Activated B cell treated with CpG ODN at 0.5 μM for 24 hours (primary cell): ENCODE measurements at regions of chr14 and their contacts with region 1.

Region 1: DNA sequence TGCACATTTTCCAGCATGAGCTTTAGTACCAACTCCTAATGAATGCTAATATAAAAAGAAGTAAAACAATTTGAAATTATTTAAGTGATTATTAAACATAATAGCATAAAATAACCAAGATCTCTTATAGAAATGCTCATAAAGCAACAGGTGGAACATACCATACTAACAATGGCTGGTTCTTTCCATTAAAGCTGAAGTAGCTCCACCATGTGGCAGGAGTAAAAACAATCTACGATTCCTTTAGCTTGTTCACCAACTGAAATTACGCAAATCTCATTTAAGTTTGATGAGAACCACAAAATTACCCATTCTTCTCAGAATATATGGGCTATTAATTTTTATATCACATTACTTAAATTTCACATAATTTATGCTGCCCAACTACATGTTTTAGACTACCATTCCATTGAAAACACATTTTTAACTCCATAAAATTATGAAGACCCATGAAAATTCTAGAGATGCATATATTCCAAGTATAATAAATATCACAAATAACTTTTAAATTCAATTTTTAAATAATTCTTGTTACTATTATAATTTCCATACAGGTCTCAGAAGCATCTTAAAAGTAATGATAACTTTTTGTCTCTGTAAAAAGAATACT is 213.6 kb downstream of the DAD1 start:
- DNase-seq: no peak
- ATAC-seq: peak; percentile 65
- H3K4me3 Mint-ChIP-seq: no peak overlapping the region
- H3K27ac Mint-ChIP-seq: no peak overlapping the region
- H3K4me1 Mint-ChIP-seq: peaks cover 5% of the 10 kb centered on the region
- H3K27me3 Mint-ChIP-seq: no peaks in the 10 kb centered on the region
- CTCF ChIP-seq: peak; percentile 46

Region 2: DNA sequence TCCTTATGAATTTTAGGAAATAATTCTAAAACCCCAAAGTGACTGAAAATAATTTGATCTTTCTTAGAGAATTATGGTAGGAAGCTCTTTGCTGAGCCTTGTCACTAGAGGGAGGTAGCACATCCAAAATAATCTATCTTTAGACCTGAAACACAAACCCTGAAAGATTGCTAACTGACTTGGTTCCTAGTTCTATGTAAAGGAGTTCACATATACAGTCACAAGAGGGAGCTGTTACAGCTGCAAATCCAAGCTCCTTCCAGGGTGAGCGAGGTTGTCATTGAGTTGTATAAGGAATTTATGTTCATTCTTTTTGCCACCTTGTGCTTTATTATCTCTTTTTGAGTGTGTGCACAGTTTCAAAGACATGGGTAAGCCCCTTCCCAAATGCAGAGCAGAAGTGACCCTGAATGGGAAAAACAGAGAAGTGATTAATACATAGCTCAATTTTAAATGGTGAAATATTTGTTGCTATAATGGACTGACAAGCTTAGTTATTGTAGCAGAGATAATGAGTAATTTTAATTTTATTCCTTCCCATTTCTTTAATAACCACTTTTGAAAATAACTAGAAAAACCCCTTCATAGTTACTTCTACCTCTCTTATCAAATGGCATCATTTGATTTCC is 174.3 kb before region 1 on chr14:
- CTCF ChIA-PET with region 1: interaction called, 11 read pairs
- POLR2A ChIA-PET with region 1: no interaction called
- intact Hi-C with region 1: no loop called
- DNase-seq: no peak
- ATAC-seq: peak; percentile 72
- H3K4me3 Mint-ChIP-seq: no peak overlapping the region
- H3K27ac Mint-ChIP-seq: no peak overlapping the region
- H3K4me1 Mint-ChIP-seq: no peaks in the 10 kb centered on the region
- H3K27me3 Mint-ChIP-seq: peaks cover 15% of the 10 kb centered on the region
- CTCF ChIP-seq: no peak

Region 3: GRCh38 chr14:22276913-22277816 is 98.3 kb before region 1 on chr14:
- CTCF ChIA-PET with region 1: interaction called, 11 read pairs
- POLR2A ChIA-PET with region 1: no interaction called
- intact Hi-C with region 1: no loop called
- DNase-seq: no peak
- ATAC-seq: no peak
- H3K4me3 Mint-ChIP-seq: no peak overlapping the region
- H3K27ac Mint-ChIP-seq: no peak overlapping the region
- H3K4me1 Mint-ChIP-seq: peaks cover 15% of the 10 kb centered on the region
- H3K27me3 Mint-ChIP-seq: peaks cover 25% of the 10 kb centered on the region
- CTCF ChIP-seq: no peak

Region 4: DNA sequence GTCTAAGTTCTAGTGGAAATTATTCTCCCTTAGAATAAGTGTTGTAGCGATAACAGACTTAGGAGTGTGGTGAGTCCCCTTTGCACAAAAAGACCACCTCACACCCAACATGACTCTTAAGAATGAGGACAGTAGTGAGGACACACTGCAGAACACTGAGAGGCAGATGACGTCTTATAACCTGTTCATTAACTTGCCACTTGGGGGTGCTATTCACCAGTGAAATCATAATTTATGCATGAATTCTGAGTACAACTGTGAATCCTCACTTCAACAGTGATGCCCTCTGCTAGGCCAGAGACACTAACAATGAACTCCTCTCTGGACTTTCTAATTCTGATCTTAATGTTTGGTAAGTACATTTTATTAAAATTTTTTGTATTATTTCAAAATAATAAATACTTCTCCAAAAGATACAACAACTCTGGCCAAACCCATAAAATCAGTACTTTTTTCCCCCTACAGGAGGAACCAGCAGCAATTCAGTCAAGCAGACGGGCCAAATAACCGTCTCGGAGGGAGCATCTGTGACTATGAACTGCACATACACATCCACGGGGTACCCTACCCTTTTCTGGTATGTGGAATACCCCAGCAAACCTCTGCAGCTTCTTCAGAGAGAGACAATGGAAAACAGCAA is 61.1 kb before region 1 on chr14:
- CTCF ChIA-PET with region 1: interaction called, 88 read pairs
- POLR2A ChIA-PET with region 1: no interaction called
- intact Hi-C with region 1: loop called (anchors 1 kb)
- DNase-seq: no peak
- ATAC-seq: peak; percentile 95
- H3K4me3 Mint-ChIP-seq: no peak overlapping the region
- H3K27ac Mint-ChIP-seq: no peak overlapping the region
- H3K4me1 Mint-ChIP-seq: no peaks in the 10 kb centered on the region
- H3K27me3 Mint-ChIP-seq: no peaks in the 10 kb centered on the region
- CTCF ChIP-seq: no peak

Region 5: GRCh38 chr14:22319526-22320361 is 55.7 kb before region 1 on chr14:
- CTCF ChIA-PET with region 1: interaction called, 88 read pairs
- POLR2A ChIA-PET with region 1: no interaction called
- intact Hi-C with region 1: loop called (anchors 1 kb)
- DNase-seq: no peak
- ATAC-seq: peak; percentile 77
- H3K4me3 Mint-ChIP-seq: no peak overlapping the region
- H3K27ac Mint-ChIP-seq: no peak overlapping the region
- H3K4me1 Mint-ChIP-seq: no peaks in the 10 kb centered on the region
- H3K27me3 Mint-ChIP-seq: peaks cover 4% of the 10 kb centered on the region
- CTCF ChIP-seq: no peak

Region 6: GRCh38 chr14:22341049-22341448 is 34.4 kb before region 1 on chr14:
- CTCF ChIA-PET with region 1: no interaction called
- POLR2A ChIA-PET with region 1: no interaction called
- intact Hi-C with region 1: no loop called
- DNase-seq: no peak
- ATAC-seq: no peak
- H3K4me3 Mint-ChIP-seq: no peak overlapping the region
- H3K27ac Mint-ChIP-seq: no peak overlapping the region
- H3K4me1 Mint-ChIP-seq: no peaks in the 10 kb centered on the region
- H3K27me3 Mint-ChIP-seq: peaks cover 11% of the 10 kb centered on the region
- CTCF ChIP-seq: no peak